ENCODE measurements at regions of chr1 and their contacts with region 1.

Region 1: GRCh38 chr1:30779294-30780071 is 21.9 kb upstream of the LAPTM5 start:
- DNase-seq: peak; percentile 95

Region 2: DNA sequence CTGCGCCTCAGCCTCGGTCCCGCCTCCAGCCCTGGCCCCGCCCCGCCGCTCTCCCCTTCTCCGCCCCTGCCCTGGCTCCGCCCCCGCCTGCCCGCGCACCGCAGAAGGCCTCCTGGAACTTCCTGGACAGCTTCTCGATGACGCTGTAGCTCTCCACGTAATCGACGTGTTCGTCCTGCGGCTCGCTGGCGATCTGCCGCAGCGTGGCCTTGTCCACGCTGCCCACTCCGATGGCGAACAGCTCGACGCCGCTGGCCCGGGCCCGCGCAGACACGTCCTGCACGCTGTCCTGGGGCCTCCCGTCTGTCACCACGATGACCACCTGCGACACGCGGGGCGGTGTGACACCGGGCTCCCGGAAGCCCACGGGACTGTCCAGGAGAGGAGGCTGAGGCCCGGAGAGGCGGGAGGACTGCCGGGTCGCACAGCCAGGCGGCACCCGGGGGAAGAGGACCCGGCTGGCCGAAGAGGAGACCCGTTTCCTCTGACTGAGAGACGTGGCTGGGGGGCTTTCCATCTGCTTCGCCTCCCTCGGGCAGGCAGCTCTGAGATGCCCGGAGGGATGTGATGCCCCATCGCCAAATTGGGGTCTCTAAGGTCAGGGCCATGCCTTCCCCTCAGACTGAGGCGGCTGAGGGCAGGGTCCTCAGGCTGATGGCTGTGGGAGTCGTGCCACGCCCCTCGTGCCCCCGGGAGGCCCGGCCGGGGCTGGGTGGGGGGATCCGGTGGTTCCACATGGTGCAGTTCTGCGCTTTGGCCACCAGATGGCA is 60.7 kb before region 1 on chr1:
- intact Hi-C with region 1: loop called (anchors 1 kb)
- DNase-seq: peak; percentile 95

Region 3: GRCh38 chr1:30738040-30738714 is 41.3 kb before region 1 on chr1:
- intact Hi-C with region 1: loop called in 1 of 2 experiments (anchors 5 kb)
- DNase-seq: no peak

Region 4: GRCh38 chr1:30765556-30766434 is 13.7 kb before region 1 on chr1:
- intact Hi-C with region 1: loop called in 1 of 2 experiments (anchors 1 kb)
- DNase-seq: no peak

Region 5: GRCh38 chr1:30847358-30847972 is 68.0 kb after region 1 on chr1:
- intact Hi-C with region 1: no loop called
- DNase-seq: peak; percentile 92

Region 6: DNA sequence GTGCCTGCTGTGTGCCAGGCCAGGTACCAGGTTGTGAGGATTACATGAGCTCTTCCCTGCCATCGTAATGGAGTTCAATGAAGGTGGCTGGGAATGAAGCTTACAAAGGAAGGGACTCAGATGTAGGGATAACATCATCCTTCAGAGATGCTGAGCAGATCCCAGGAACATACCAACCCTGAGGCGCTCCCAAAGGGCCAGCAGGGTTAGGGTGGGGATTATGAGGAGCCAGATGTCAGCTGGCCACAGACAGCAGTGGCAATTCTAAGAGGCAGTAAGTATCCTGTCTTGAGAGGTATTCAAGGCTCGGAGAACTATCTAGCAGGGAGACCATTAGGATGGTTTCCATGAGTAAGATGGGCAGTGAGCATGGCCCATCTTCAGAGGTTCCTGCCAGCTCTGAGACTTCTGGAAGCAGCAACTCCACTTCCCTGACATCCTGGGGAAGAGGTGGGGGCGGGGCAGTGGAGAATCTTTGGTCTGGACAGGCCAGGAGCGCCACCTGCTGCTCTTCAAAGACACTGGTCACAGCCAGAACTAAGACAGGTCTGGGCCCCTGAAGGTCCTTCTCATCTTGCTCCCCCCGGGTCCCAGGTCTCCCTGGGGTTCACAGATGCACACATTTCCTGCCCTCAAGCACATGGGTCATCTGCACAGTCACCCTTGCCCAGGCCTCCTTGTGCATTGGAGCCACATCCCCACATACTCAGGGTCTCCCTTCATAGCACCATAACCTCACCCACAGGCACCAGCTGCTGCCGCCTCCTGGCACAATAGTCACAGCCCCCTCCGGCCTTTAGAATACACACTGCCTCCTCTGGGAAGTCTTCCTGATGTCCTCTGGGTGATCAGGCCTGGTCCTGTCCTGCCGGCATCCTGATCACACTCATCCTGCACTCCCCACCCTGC is 131.8 kb after region 1 on chr1:
- intact Hi-C with region 1: loop called in 1 of 2 experiments (anchors 5 kb)
- DNase-seq: peak; percentile 95

Region 7: GRCh38 chr1:31084782-31085569 is 305.5 kb after region 1 on chr1:
- intact Hi-C with region 1: loop called in 1 of 2 experiments (anchors 10 kb)
- DNase-seq: peak; percentile 17

Measured in posterior vena cava (tissue), 2 donors.